WTC11 (cell line): ENCODE measurements at regions of chr4 and their contacts with region 1.

Region 1: GRCh38 chr4:4384837-4385236 is 2.1 kb upstream of the NSG1 start:
- DNase-seq: peak; percentile 84
- ATAC-seq: peak; percentile 56
- H3K4me3 Mint-ChIP-seq: peak overlapping the region; percentile 58
- H3K27ac Mint-ChIP-seq: no peak overlapping the region
- H3K4me1 Mint-ChIP-seq: peaks cover 27% of the 10 kb centered on the region
- H3K27me3 Mint-ChIP-seq: peaks cover 64% of the 10 kb centered on the region
- CTCF ChIP-seq: 0 out of 2 replicates have a peak, but pooled peaks have one; percentile 46

Region 2: DNA sequence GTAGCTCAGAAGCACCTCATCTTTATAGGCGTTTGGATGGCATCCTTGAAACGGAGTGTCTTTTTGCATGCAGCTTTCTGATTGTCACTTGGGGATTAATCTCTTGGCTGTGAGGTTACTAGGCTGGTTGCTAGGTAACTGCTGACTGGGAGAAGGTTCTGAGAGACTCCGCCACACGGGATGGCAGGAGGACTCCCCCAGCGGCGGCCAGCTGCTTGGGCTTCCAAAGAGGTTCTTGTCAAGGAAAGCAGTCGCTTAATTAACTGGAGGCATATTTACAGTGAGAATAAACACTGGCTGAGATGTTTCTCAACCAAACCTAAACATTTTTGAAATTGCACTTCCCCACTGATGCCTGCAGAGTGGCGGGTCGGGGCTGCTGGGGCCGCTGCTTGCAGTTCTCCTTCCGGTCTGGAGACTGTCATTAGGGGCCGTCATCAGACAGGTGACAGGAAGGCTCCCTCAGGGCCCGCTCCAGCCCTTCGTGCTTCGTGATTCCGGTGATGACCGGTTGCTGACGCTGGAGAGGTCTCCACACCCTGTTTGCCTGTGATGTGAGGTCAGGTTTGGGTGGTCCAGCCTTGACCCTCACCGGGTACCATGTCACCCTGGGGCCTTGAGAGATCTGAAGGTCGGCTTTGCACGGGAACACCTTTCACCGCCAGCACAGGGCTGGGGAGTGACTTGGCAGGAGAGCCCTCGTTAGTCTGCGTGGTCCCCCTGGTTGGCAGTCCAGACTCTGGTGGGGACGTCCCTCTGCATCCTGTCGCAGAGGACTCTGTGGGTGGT is 11.2 kb after region 1 on chr4:
- CTCF ChIA-PET with region 1: interaction called, 27 read pairs
- POLR2A ChIA-PET with region 1: no interaction called
- DNase-seq: peak; percentile 40
- ATAC-seq: peak; percentile 43
- H3K4me3 Mint-ChIP-seq: no peak overlapping the region
- H3K27ac Mint-ChIP-seq: no peak overlapping the region
- H3K4me1 Mint-ChIP-seq: peaks cover 16% of the 10 kb centered on the region
- H3K27me3 Mint-ChIP-seq: no peaks in the 10 kb centered on the region
- CTCF ChIP-seq: no peak

Region 3: DNA sequence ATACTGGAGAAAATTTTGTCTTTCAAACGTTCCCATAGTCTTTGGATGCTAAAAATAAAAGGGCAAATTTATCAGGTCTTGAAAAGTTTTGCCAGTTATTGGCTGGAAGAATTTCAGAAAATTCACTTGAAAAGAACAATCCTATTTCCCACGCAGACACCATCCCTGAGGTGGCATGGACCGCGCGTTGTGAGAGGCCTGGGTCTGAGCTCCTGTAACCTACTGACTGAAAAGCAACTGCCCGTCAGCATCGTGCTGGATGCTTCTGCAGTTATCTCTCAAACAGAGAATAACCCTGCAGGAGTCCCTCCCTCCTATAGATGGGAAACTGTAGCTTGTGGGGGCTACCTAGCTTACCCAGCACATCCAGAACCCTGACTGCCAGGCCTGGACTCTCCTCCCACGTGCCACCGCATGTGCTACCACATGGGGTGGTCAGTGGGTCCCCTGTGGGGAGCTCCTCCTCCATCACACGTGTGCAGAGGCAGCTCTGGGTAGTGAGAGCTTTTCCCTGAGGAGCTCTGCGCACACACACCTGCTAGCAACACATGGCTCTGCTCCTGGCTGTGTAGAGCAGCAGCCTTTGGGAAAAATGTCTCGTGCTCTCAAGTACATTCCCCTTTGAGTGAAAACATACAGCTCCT is 38.1 kb after region 1 on chr4:
- CTCF ChIA-PET with region 1: interaction called, 18 read pairs
- POLR2A ChIA-PET with region 1: no interaction called
- DNase-seq: no peak
- ATAC-seq: no peak
- H3K4me3 Mint-ChIP-seq: no peak overlapping the region
- H3K27ac Mint-ChIP-seq: 0 out of 2 replicates have a peak overlapping the region, but pooled peaks have one; percentile 4
- H3K4me1 Mint-ChIP-seq: peaks cover 49% of the 10 kb centered on the region
- H3K27me3 Mint-ChIP-seq: no peaks in the 10 kb centered on the region
- CTCF ChIP-seq: no peak

Region 4: GRCh38 chr4:4430492-4431197 is 45.8 kb after region 1 on chr4:
- CTCF ChIA-PET with region 1: interaction called, 27 read pairs
- POLR2A ChIA-PET with region 1: no interaction called
- DNase-seq: peak; percentile 69
- ATAC-seq: peak; percentile 84
- H3K4me3 Mint-ChIP-seq: no peak overlapping the region
- H3K27ac Mint-ChIP-seq: no peak overlapping the region
- H3K4me1 Mint-ChIP-seq: peaks cover 43% of the 10 kb centered on the region
- H3K27me3 Mint-ChIP-seq: peaks cover 8% of the 10 kb centered on the region
- CTCF ChIP-seq: peak; percentile 63